ENCODE measurements at regions of chr6 and their contacts with region 1.

Region 1: DNA sequence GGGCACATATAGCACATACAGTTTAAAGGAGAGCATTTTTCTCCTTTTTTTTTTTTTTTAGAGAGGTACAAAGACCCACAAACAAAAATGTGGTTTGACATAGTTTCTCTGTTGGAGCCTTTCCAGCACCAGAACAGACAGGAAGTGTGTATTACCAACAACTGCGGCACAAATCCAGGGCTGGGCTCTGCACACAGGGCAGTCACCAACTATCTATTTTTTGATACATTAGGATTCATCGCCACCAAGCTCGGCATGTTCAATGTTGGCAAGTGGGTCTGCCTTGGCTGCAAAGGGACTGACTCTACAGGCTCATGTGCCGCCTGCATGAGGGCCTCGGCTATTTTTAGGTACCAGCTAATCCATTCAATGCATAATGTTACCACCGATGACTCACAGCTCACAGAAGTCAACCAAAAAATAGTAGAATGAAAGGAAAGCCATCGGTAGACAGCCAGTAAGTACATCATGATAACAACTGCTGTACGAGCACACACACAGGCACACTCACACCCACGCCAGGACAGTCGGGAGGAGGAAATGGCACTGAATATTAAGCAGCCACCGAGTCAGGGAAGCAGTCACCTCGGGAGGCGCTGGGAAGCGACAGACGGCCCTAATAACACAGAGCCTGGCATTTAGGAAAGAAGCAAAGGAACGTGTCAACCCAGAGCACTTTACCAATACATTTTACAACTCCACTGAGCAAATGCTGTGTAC is 81.6 kb downstream of the GMPR start:
- DNase-seq: peak; percentile 60 to 94 (median 77)

Region 2: DNA sequence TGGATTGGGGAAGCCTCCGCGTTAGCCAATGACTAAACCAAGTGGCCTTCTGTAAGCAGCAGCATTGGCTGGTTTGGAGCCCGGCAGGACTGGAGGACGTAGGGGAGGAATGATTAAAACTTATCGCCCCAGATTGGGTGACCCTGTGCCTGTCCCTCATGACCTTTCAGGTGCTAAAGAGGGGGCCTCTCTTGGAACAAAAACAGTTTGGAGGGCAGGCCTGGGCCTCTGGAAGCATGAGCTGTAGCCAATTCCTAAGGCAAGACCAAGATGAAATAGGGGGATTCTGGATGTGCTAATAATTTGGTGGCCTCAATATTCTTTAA is 80.2 kb before region 1 on chr6:
- intact Hi-C with region 1: loop called (anchors 10 kb)
- DNase-seq: peak in 6 of 42 donors; percentile 60 to 76 (median 70)

Measured in head of caudate nucleus (tissue), 42 donors.